ENCODE measurements at regions of chrX and their contacts with region 1.

Region 1: GRCh38 chrX:131763674-131764073 is 219.8 kb downstream of the OR13H1 start:
- DNase-seq: peak; percentile 58 to 79
- ATAC-seq: peak; percentile 89 to 93 (median 92)
- H3K4me3 ChIP-seq: peak overlapping the region; percentile 68
- H3K27ac ChIP-seq: peak overlapping the region; percentile 60
- H3K4me1 ChIP-seq: no peaks in the 10 kb centered on the region
- H3K27me3 ChIP-seq: no peaks in the 10 kb centered on the region
- CTCF ChIP-seq: peak; percentile 61

Region 2: DNA sequence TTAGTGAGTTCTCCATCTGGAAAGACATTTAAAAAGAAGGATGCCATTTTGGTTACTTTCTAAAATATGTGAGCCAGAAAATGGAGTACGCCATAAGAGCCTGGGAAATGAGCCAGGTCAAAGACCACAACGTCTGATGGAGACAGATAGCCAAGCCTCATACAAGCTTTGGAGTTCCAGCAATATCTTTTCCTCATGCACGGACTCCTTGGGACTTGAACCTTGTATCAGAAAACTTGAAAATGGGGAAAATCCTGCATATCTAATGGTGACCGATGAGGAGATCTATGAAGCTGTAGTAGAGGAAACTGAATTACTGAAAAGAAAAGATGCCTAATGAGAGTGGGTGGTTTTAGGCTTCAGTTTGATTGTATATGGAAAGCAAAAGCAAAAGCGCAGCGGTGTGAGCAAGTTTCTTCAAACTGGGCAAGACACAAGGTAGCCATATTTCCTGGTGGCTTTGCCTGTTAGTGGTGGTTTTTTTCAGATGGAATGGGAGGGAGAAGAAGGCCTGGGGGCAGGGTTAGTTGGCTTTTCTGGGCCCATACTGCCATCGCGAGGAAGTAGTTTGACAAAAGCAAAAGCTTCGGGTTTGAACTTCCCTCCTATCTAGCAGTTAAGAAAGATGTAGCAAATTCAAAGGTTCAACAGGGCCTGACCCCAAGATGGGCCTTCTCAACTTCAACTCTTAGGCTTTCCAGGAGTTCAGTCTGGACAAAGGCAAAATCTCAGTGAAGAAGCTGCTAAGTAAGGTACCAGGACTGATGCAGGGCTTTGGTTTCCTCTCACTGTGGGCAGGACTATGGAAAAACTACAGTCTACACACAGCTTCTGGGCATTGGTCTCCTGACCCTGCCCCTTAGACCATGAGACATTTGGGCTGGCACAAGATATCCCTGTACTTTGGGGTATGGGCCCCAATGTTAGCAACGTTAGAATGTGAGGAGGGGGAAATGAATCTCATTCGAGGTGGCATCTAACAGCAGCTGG is 49.5 kb after region 1 on chrX:
- intact Hi-C with region 1: loop called in 1 of 2 experiments (anchors 5 kb)
- DNase-seq: peak; percentile 66 to 82
- ATAC-seq: peak; percentile 88 to 90 (median 90)
- H3K4me3 ChIP-seq: peak overlapping the region; percentile 60
- H3K27ac ChIP-seq: peak overlapping the region; percentile 55
- H3K4me1 ChIP-seq: no peaks in the 10 kb centered on the region
- H3K27me3 ChIP-seq: no peaks in the 10 kb centered on the region
- CTCF ChIP-seq: peak; percentile 58